CD8-positive, alpha-beta memory T cell (primary cell): ENCODE measurements at regions of chr2 and their contacts with region 1.

Region 1: GRCh38 chr2:96554293-96555145 is 18.0 kb downstream of the ARID5A start:
- DNase-seq: peak; percentile 59 to 81 (median 67)
- H3K4me3 ChIP-seq: no peak overlapping the region
- H3K4me3 Mint-ChIP-seq: peak overlapping the region in 4 of 7 donors; percentile 13 to 61 (median 32)
- H3K27ac ChIP-seq: no peak overlapping the region
- H3K27ac Mint-ChIP-seq: peak overlapping the region in 6 of 8 donors; percentile 32 to 94 (median 57)
- H3K4me1 ChIP-seq: peaks cover 12% of the 10 kb centered on the region
- H3K4me1 Mint-ChIP-seq: peaks cover 15 to 37% (median 19%) of the 10 kb centered on the region in 3 donors
- H3K27me3 ChIP-seq: no peaks in the 10 kb centered on the region
- H3K27me3 Mint-ChIP-seq: no peaks in the 10 kb centered on the region

Region 2: DNA sequence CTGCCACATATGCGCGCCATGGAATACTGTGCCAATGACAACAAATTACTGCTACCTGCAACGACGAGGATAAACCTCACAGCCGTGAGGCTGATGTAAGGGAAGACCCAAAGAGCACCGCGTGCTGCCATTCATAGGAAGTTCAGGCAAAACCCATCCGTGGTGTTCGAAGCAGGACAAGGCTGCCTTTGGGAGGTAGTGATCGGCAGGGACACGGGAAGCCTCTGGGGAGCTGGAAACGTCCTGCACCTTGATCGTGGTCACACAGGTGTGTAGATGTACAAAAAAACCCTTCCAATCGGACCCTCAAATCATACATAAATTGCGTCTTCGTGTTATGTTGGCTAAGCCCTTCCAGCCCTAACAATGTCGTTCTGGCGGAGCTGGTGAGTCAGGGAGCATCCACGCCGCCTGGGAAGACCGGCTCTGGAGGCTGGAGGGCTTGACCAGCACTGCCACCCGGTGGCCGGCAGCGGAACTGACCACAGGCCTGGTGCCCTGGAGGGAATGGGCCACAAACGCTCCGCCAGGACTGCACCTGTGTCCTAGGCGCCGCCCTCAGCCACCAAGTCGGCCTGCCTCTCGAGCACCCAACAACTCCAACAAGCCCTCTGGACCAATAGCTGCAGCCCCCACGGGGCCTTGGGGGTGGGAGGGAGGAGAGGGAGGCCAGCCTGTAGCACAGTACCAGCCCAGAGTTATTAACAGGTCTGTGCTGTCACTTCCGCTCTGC is 45.2 kb before region 1 on chr2:
- CTCF ChIA-PET with region 1: interaction called, 11 read pairs
- POLR2A ChIA-PET with region 1: no interaction called
- DNase-seq: peak in 4 of 5 donors; percentile 21 to 64 (median 31)
- H3K4me3 ChIP-seq: no peak overlapping the region
- H3K4me3 Mint-ChIP-seq: peak overlapping the region in 2 of 7 donors; percentile 40 to 58
- H3K27ac ChIP-seq: no peak overlapping the region
- H3K27ac Mint-ChIP-seq: peak overlapping the region in 2 of 8 donors; percentile 26 to 35
- H3K4me1 ChIP-seq: peaks cover 11% of the 10 kb centered on the region
- H3K4me1 Mint-ChIP-seq: peaks cover 8 to 21% (median 13%) of the 10 kb centered on the region in 3 donors
- H3K27me3 ChIP-seq: peaks cover 4% of the 10 kb centered on the region
- H3K27me3 Mint-ChIP-seq: peaks cover 7 to 15% of the 10 kb centered on the region in 2 donors

Region 3: GRCh38 chr2:96514521-96514920 is 40.0 kb before region 1 on chr2:
- CTCF ChIA-PET with region 1: interaction called, 11 read pairs
- POLR2A ChIA-PET with region 1: no interaction called
- DNase-seq: no peak
- H3K4me3 ChIP-seq: no peak overlapping the region
- H3K4me3 Mint-ChIP-seq: no peak overlapping the region
- H3K27ac ChIP-seq: no peak overlapping the region
- H3K27ac Mint-ChIP-seq: no peak overlapping the region
- H3K4me1 ChIP-seq: no peaks in the 10 kb centered on the region
- H3K4me1 Mint-ChIP-seq: peaks cover 0 to under 1% (median 0%) of the 10 kb centered on the region in 3 donors
- H3K27me3 ChIP-seq: peaks cover 4% of the 10 kb centered on the region
- H3K27me3 Mint-ChIP-seq: peaks cover 7 to 8% of the 10 kb centered on the region in 2 donors